ENCODE measurements at regions of chr16 and their contacts with region 1.

Region 1: GRCh38 chr16:72832621-72833248 is 215.2 kb downstream of the ZFHX3 start:
- DNase-seq: no peak
- H3K4me3 ChIP-seq: no peak overlapping the region
- CTCF ChIP-seq: peak; percentile 98

Region 2: GRCh38 chr16:72590151-72590937 is 242.4 kb before region 1 on chr16:
- CTCF ChIA-PET with region 1: no interaction called
- POLR2A ChIA-PET with region 1: no interaction called
- DNase-seq: peak; percentile 41
- H3K4me3 ChIP-seq: no peak overlapping the region
- CTCF ChIP-seq: no peak

Region 3: DNA sequence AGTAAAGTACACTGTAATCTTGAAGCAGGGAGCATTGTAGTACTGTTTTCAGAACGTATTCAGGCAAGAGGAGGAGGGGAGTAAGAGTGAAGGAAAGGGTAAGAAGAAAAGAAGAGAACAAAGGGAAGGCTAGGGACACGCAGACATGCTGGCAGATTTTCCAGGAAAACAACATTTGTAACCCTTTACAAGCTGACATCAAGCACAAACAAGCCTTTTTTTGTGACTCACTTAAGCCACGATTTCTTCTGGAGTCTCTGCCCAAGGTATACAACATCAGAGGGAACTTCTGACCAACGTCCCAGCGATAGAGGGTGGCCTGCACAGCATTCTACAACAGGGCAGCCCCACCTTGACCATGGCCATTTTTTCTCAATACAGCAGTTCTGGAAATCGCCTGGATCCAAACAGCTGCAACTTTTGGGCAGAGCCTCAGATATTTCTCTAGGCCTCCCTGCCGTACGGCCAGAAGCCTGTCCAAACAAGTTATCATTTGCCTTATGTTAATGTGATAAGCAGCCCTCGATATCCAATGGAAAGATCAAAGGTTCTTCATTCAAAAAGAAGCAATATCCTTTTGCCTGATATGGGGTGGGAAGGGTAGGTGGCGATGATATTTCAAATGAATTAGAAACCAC is 32.1 kb before region 1 on chr16:
- CTCF ChIA-PET with region 1: interaction called, 13 read pairs
- POLR2A ChIA-PET with region 1: no interaction called
- DNase-seq: no peak
- H3K4me3 ChIP-seq: no peak overlapping the region
- CTCF ChIP-seq: no peak

Region 4: GRCh38 chr16:72856797-72857196 is 24.1 kb after region 1 on chr16:
- CTCF ChIA-PET with region 1: interaction called, 123 read pairs
- POLR2A ChIA-PET with region 1: no interaction called
- DNase-seq: no peak
- H3K4me3 ChIP-seq: no peak overlapping the region
- CTCF ChIP-seq: peak; percentile 31

Region 5: DNA sequence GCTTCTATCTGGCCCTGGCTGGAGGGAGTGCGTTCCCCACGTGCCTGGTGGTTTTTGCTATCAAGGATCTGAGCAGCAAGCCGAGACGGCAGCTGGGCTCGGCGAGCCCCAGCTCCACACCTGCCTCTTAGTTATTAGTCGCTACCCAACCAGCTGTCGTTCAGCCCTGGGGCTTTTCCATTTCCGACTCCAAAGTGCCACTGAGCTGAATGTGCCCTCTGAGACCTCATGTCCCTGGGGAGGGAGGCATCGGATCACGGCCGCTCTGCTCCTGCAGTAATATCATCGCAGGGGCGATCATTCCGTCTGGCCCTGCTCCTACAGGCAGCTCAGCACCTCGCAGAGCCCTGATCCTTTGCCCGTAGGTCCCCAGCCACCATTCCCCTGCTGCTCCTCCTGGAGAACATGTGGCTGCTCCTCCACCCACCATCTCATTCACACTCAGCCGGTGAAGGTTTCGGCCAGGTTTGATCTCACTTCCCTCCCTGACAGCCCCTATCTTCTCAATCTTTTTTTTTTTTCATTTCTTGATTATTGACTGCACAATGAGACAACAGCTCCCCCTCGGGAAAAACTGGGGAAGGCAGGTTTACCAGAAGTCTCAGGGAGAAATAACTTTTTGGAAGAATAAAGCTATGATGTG is 128.5 kb after region 1 on chr16:
- CTCF ChIA-PET with region 1: interaction called, 19 read pairs
- POLR2A ChIA-PET with region 1: no interaction called
- DNase-seq: no peak
- H3K4me3 ChIP-seq: no peak overlapping the region
- CTCF ChIP-seq: peak; percentile 24

Region 6: GRCh38 chr16:73064205-73064988 is 231.7 kb after region 1 on chr16:
- CTCF ChIA-PET with region 1: interaction called, 12 read pairs
- POLR2A ChIA-PET with region 1: interaction called, 3 read pairs
- DNase-seq: peak; percentile 51
- H3K4me3 ChIP-seq: peak overlapping the region; percentile 42
- CTCF ChIP-seq: no peak

Region 7: DNA sequence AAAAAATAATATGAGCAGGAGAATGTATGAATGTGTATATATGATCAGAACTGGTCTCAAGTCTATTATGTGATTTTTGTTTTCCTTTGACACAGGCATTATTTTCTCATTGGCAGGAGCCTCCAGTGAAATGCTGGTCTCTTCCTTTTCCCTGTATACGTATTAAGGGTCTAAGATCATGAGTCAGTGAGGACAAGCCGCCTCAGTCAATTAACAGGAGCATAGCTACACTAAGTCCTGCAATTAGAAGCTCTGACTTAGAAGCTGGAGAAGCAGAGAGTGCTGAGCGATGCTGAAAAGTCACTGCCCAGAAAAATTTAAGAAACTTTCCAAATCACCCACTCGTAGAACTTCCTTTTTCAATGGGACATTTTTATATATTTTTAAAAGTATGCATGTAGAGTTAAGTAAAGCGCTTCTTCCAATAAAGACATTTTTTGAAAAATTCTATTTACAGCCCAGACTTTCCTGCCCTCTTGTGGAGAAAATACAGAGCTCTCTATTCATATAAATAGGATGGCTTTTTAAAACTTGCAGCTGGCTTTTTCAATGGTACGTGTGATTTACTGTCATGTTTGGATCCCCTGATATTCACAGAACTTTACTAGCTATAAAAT is 1393.7 kb after region 1 on chr16:
- CTCF ChIA-PET with region 1: no interaction called
- POLR2A ChIA-PET with region 1: no interaction called
- DNase-seq: no peak
- H3K4me3 ChIP-seq: no peak overlapping the region
- CTCF ChIP-seq: peak; percentile 10